ENCODE measurements at regions of chr9 and their contacts with region 1.

Region 1: DNA sequence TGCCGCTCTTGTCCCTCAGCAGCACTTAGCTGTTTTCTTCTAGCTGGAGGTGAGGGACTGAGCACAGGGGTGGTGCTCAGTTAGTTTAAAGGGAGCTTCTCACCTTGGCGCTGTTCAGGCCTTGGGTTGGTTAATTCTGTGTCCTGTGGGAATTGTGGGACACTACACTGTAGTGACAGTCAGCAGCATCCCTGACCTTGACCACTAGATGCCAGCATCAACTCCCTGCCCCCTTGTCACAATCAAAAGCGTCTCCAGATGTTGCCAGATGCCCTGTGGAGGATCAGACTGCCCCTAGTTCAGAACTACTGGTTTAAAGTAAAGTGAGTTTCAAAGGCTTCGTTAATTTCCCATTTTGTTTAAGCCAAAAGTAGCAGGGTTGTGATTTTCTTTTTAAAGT is 65.5 kb upstream of the DMRT3 start:
- DNase-seq: no peak
- ATAC-seq: no peak
- H3K4me3 ChIP-seq: no peak overlapping the region
- H3K27ac ChIP-seq: no peak overlapping the region
- H3K4me1 ChIP-seq: no peaks in the 10 kb centered on the region
- H3K27me3 ChIP-seq: peaks cover 0 to 62% (median 18%) of the 10 kb centered on the region in 9 donors
- CTCF ChIP-seq: no peak
- POLR2A ChIP-seq: no peak

Region 2: DNA sequence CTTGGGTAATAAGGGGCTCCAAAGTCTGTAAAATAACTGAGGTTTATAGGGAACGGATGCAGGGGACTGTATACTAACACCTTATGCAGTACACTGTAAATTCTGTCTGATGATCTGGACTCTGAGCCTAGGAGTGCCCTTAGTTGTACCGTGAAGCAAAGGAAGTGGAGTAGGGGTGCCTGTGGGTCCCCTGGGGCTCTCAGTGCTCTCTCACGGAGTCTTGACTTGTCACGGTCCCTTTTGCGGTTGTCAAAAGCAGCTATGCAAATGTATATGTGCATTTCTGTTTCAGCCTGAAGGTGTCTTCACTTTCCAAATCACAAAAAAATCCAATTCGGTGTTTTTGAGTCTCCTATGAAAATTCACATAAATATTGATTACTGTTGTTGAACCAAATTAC is 51.8 kb before region 1 on chr9:
- intact Hi-C with region 1: loop called in 1 of 10 experiments (anchors 10 kb)
- DNase-seq: no peak
- ATAC-seq: no peak
- H3K4me3 ChIP-seq: no peak overlapping the region
- H3K27ac ChIP-seq: no peak overlapping the region
- H3K4me1 ChIP-seq: no peaks in the 10 kb centered on the region
- H3K27me3 ChIP-seq: peaks cover 0 to 16% (median 0%) of the 10 kb centered on the region in 9 donors
- CTCF ChIP-seq: no peak
- POLR2A ChIP-seq: no peak